Activated T-helper 1 cell treated with anti-CD3 and anti-CD28 coated beads, Interleukin-12 subunit alpha, Interleukin-12 subunit beta, Interleukin-2, Interleukin-4 antibody, amounts not matched to agents 30 ng/mL and 10 ng/mL and 1 ng/mL, durations not matched to agents 14 hours and 24 hours and 36 hours (primary cell): ENCODE measurements at regions of chr2 and their contacts with region 1.

Region 1: GRCh38 chr2:68709421-68709911 is 25.1 kb upstream of the ARHGAP25 start:
- DNase-seq: no peak
- H3K4me3 Mint-ChIP-seq: no peak overlapping the region
- H3K27ac Mint-ChIP-seq: no peak overlapping the region
- H3K4me1 Mint-ChIP-seq: peaks cover 36% of the 10 kb centered on the region
- H3K27me3 Mint-ChIP-seq: peaks cover 6% of the 10 kb centered on the region

Region 2: DNA sequence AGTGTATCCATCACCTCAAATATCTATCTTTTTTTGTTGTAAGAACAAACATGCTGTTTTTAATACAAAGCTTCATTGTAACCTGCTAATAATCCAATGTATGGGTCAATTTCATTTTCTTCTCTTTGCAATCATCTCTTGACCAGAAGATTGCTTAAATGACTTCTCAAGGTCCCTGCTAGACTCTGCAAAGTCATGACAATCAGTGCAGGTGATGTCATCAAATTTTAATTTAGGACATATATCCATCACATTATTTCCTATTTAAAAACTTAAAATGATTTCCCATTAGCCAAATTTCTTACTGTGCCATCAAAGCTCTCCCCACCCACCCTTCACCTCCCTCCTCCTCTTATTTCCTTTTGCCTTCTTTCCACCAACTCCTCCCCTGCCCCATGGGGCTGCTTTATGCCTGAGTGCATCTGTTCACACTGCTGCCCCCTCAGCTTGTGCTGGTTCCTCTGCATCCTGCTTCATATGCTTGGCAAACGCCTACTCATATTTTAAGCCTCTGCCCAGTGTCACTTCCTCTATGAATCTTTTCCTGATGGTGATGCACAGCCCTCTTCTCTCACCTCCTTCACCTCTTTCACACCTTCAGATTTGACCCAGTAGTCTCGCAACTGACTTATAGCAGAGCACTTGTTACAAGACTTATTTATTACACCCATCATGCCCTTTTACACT is 324.1 kb before region 1 on chr2:
- intact Hi-C with region 1: no loop called
- DNase-seq: no peak
- H3K4me3 Mint-ChIP-seq: peak overlapping the region; percentile 42
- H3K27ac Mint-ChIP-seq: peak overlapping the region; percentile 91
- H3K4me1 Mint-ChIP-seq: peaks cover 49% of the 10 kb centered on the region
- H3K27me3 Mint-ChIP-seq: peaks cover 2% of the 10 kb centered on the region

Region 3: DNA sequence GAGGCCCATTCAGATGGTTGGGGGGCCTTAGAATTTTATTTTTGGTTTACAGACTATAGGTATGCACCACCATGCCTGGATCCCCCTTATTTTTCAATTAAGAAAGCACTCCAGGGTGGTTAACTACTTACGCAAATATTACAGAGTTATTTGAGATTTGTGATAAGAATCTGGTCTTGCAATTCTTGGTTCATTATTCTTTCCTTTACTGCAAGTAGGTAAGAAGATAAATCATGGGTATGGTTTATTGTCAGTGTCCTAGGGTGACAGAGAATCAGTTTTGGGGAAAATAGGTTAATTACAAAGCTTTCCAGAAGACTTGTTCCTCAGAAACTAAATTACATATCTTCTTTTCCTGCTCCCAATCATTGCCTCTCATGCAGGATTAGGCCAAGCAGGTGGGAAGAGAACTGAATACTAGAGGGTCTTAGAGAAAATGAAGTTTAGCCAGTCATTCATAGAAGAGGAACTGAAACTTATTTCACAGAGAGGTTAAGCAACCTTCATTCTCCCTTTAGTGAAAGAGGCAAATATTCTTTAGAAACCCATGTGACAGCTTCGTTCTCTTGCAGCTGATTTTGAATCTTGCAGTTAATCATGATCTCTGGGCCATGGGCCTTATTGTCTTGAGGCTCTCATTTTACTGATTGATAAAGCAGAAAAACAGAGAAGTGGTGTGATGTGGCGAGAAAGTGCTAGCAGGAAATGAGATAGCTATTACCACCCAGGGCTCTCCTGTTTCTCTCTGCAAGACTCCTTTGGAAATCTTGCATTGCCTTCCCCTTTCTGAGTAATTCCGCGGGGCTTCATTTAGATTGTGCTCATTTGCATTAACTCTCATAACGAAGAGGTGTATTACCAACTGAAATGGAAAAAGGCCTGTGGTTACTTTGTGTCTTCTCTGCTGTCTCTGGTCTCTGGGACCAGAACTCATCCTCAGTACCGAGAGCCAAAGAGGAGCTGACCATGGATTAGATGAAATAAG is 19.6 kb before region 1 on chr2:
- intact Hi-C with region 1: loop called (anchors 2 kb)
- DNase-seq: no peak
- H3K4me3 Mint-ChIP-seq: peak overlapping the region; percentile 32
- H3K27ac Mint-ChIP-seq: peak overlapping the region; percentile 83
- H3K4me1 Mint-ChIP-seq: peaks cover 21% of the 10 kb centered on the region
- H3K27me3 Mint-ChIP-seq: peaks cover 7% of the 10 kb centered on the region

Region 4: GRCh38 chr2:68727683-68728375 is 18.4 kb after region 1 on chr2:
- intact Hi-C with region 1: no loop called
- DNase-seq: no peak
- H3K4me3 Mint-ChIP-seq: peak overlapping the region; percentile 32
- H3K27ac Mint-ChIP-seq: peak overlapping the region; percentile 82
- H3K4me1 Mint-ChIP-seq: peaks cover 77% of the 10 kb centered on the region
- H3K27me3 Mint-ChIP-seq: peaks cover 2% of the 10 kb centered on the region

Region 5: DNA sequence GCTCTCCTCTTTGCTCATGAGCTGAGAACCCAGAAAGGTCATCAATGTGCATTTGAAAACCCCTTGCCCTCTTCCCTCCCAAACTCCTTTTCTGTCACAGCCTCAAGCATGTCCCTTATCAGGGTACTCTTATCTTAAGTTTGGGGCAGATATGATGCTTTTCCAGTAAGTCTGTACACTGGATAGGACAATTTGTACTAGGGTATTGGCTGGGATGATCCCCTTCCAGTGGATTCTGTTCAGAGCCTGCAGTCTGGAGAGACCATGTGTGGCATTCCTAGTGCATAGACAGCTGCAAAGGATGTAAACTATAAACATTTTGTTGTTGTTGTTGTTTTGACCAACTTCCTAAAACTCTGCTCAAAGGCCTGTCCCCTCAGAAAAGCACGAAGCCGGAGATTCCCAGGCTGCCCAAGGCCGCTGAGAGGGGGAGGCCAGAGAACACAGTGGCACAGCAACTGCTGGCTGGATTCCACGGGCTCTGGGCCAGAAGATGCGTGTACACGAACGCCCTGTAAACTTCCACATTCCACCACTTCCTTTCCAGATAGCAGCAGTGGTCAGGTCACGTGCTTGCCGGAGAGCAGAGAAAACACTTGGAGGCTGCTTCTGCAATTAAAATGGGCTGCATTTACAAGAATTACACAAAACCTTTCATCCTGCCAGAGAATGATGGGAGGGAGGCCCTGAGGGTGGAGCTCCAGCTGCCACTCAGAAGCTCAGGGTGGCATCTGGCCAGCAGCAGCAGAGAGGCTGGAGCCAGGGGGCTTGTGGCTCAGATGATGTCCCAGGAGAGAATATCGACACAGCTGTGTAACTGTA is 119.6 kb after region 1 on chr2:
- intact Hi-C with region 1: no loop called
- DNase-seq: peak; percentile 71
- H3K4me3 Mint-ChIP-seq: peak overlapping the region; percentile 71
- H3K27ac Mint-ChIP-seq: peak overlapping the region; percentile 92
- H3K4me1 Mint-ChIP-seq: peaks cover 77% of the 10 kb centered on the region
- H3K27me3 Mint-ChIP-seq: no peaks in the 10 kb centered on the region